BJ (cell line): ENCODE measurements at regions of chr1 and their contacts with region 1.

Region 1: DNA sequence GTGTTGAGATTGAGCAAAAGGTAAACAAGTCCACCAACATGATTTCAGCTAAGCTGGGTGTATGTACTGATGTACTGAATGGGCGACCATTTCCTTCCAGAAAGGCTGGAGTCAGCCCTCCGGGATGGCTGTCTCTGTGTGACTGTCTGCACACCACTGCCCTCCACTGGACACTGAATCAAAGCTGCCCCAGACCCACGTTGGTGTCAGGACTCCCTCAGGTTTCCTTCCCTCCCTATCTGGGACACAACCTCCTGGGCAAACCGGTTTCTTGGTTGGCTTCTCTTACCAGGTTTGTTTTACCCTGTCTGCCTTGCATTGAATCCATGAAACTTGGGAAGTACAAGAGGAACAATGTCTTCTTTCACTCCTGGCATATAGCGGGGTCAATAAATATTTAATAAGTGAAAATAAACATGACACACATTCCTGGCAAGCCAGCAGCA is 5.3 kb upstream of the SRP9 start:
- DNase-seq: no peak
- H3K4me3 ChIP-seq: no peak overlapping the region
- H3K27me3 ChIP-seq: no peaks in the 10 kb centered on the region
- CTCF ChIP-seq: peak; percentile 90

Region 2: DNA sequence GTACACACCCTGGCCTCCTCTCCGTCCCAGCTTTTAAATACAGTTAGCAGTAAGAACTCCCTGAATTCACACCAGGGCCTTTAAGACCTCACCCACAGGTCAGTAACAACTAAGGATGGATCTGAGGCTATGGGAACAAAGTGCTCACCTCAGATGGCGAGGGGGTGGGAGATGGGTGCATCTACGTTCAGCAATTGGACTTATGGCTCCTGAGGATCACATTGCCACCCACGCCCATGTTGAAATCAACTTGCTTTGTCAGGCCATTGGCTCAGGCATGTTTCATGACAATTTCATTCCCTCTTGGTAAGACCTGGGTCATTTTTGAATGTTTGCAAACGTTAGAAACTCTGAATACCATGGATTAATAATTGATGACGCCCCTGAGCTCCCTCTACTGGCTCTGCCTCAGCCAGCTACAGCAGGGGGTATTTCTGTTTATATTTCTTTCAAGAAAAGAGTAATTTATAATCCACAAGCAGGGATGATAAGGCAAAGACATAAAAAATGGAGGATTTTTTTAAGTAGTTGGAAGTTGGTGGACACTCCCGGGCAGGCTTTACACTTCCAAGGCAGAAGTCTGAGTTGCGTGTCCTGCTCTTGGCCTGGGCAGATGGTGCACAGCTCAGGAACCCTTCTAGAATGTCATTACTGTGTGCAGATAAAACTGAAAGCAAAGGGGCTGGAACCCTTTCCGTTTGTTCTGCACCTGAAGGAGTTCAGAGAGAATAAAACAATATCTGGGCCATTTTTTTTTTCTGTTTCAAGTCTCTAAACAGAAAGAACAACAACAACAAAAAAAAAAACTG is 330.8 kb before region 1 on chr1:
- CTCF ChIA-PET with region 1: no interaction called
- POLR2A ChIA-PET with region 1: no interaction called
- DNase-seq: no peak
- H3K4me3 ChIP-seq: no peak overlapping the region
- H3K27me3 ChIP-seq: peaks cover 5% of the 10 kb centered on the region
- CTCF ChIP-seq: 0 out of 2 replicates have a peak, but pooled peaks have one; percentile 29

Region 3: DNA sequence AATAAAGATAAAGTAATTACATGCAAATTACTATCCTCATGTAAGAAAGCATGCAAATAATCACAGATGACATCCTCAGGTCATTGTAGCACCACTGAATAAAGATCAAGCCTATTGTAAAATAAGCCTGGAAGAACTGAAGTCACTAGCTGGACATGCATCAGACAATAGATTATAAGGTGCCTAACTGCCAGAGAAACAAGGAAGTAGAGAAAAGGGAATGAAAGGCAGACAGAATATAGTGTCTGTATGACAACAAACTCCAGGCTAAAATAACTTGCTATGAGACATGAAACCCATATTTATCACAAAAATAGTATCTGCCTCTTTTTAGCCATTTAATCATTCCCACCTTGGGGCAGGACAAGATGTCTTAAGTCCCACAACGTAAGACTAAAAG is 228.1 kb before region 1 on chr1:
- CTCF ChIA-PET with region 1: interaction called, 14 read pairs
- POLR2A ChIA-PET with region 1: interaction called, 4 read pairs
- DNase-seq: no peak
- H3K4me3 ChIP-seq: no peak overlapping the region
- H3K27me3 ChIP-seq: no peaks in the 10 kb centered on the region
- CTCF ChIP-seq: no peak

Region 4: GRCh38 chr1:225554216-225554812 is 218.0 kb before region 1 on chr1:
- CTCF ChIA-PET with region 1: interaction called, 26 read pairs
- POLR2A ChIA-PET with region 1: interaction called, 4 read pairs
- DNase-seq: no peak
- H3K4me3 ChIP-seq: no peak overlapping the region
- H3K27me3 ChIP-seq: no peaks in the 10 kb centered on the region
- CTCF ChIP-seq: peak; percentile 58

Region 5: GRCh38 chr1:225652729-225653462 is 119.5 kb before region 1 on chr1 and contains the start of gene ENAH:
- CTCF ChIA-PET with region 1: interaction called, 10 read pairs
- POLR2A ChIA-PET with region 1: interaction called, 6 read pairs
- DNase-seq: no peak
- H3K4me3 ChIP-seq: peak within 1 kb of the TSS; percentile 79
- H3K27me3 ChIP-seq: no peaks in the 10 kb centered on the region
- CTCF ChIP-seq: no peak
- polyA plus RNA-seq, gene ENAH: 40.9 and 68.7 TPM in 2 replicates

Region 6: GRCh38 chr1:225944951-225945350 is 172.6 kb after region 1 on chr1:
- CTCF ChIA-PET with region 1: no interaction called
- POLR2A ChIA-PET with region 1: no interaction called
- DNase-seq: no peak
- H3K4me3 ChIP-seq: no peak overlapping the region
- H3K27me3 ChIP-seq: peaks cover 11% of the 10 kb centered on the region
- CTCF ChIP-seq: no peak